GM12878 (cell line): ENCODE measurements at regions of chr15 and their contacts with region 1.

Region 1: GRCh38 chr15:59247364-59247763 is 40.7 kb downstream of the LDHAL6B start:
- DNase-seq: no peak
- ATAC-seq: peak; percentile 61
- H3K4me3 ChIP-seq: no peak overlapping the region
- H3K27ac ChIP-seq: peak overlapping the region; percentile 33; the same call in 1 of the 2 replicates
- H3K4me1 ChIP-seq: peaks cover 54% of the 10 kb centered on the region
- H3K27me3 ChIP-seq: no peaks in the 10 kb centered on the region
- CTCF ChIP-seq: peak; percentile 57 to 68 (median 62)
- EP300 ChIP-seq: no peak
- POLR2A ChIP-seq: no peak
- RAD21 ChIP-seq: peak; percentile 70

Region 2: GRCh38 chr15:58987489-58988005 is 259.8 kb before region 1 on chr15 and contains the start of gene RNF111:
- CTCF ChIA-PET with region 1: interaction called, 3 read pairs
- POLR2A ChIA-PET with region 1: interaction called, 3 read pairs
- RAD21 ChIA-PET with region 1: no interaction called
- SMC1A ChIA-PET with region 1: interaction called, 4 read pairs
- in situ Hi-C with region 1: no loop called
- intact Hi-C with region 1: loop called (anchors 10 kb)
- DNase-seq: peak; percentile 90
- ATAC-seq: peak; percentile 90
- H3K4me3 ChIP-seq: peak within 1 kb of the TSS; percentile 75
- H3K27ac ChIP-seq: peak within 1 kb of the TSS; percentile 92
- H3K4me1 ChIP-seq: no peaks in the 10 kb centered on the region
- H3K27me3 ChIP-seq: no peaks in the 10 kb centered on the region
- CTCF ChIP-seq: no peak
- EP300 ChIP-seq: no peak
- POLR2A ChIP-seq: peak; percentile 76
- RAD21 ChIP-seq: no peak
- polyA plus RNA-seq, gene RNF111: 8.6 TPM

Region 3: DNA sequence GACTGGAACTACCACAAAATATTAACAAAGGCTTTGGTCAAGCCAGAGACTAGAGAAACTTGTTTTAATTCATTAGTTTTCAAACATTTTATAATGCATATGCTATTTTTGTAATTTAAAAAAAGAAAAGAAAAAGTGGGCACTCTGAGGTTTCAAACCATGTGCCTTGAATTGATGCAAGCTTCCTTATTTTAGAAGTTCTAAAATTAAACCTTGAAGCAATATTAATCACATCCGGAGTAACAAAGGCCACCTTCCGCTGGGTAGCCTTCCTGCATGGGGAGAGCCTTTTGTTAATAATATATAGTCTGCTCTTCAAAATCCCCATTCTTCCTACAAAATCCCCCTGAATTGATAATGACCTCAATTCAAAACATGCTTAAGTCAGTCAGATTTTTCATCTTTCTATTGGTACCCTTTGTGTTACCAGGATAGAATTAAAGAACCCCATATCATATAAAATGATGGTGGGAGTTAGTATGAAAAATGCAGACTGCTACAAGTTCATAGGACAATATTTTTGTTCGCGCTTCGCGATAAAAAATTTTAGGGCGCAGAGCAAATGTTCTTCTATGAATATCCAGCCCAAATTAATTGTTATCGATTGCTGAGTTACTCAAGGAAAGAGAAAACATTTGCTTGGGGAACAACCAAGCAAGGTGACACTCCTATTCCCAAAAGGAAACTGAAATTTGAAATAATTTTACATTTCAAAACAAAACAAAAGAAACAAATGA is 10.1 kb before region 1 on chr15:
- CTCF ChIA-PET with region 1: interaction called, 44 read pairs
- POLR2A ChIA-PET with region 1: interaction called, 5 read pairs
- RAD21 ChIA-PET with region 1: interaction called, 46 read pairs
- SMC1A ChIA-PET with region 1: interaction called, 70 read pairs
- in situ Hi-C with region 1: no loop called
- intact Hi-C with region 1: no loop called
- DNase-seq: peak; percentile 70
- ATAC-seq: peak; percentile 89
- H3K4me3 ChIP-seq: peak overlapping the region; percentile 35
- H3K27ac ChIP-seq: peak overlapping the region; percentile 78
- H3K4me1 ChIP-seq: peaks cover 11% of the 10 kb centered on the region
- H3K27me3 ChIP-seq: no peaks in the 10 kb centered on the region
- CTCF ChIP-seq: no peak
- EP300 ChIP-seq: peak; percentile 52 to 87; a peak in 2 of 4 replicates
- POLR2A ChIP-seq: no peak
- RAD21 ChIP-seq: no peak

Region 4: DNA sequence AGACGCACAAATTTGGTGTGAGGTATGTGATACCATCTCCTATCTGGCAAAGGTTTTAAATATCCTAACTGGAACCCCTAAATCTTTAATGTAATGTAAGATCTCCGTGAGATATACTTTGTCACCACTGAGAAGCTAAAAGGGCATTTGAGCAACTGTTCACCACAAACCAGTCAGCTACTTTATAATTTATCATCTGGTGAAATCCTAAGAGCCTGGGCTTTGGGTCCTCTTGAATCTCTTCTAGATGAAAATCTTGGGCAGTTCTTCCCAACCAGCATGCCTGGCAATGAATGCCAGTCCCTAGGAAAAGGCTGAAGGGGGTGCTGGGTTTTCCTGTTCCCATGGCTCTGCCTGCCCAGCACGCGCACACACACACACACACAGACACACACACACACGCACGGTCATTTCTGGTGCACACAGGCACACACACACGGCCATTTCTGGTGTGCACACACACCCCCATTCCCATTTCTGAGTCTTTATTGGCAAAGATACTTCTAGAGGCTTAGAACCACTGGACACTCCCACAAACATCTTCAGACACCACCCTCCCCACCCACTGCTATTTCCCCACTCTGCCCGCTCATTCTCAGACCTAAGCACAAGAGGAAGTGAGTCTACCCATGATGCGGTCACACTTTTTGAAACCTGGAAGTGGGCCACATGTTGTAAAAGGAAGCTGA is 52.7 kb after region 1 on chr15:
- CTCF ChIA-PET with region 1: interaction called, 68 read pairs
- POLR2A ChIA-PET with region 1: interaction called, 14 read pairs
- RAD21 ChIA-PET with region 1: interaction called, 54 read pairs
- SMC1A ChIA-PET with region 1: interaction called, 64 read pairs
- in situ Hi-C with region 1: no loop called
- intact Hi-C with region 1: loop called (anchors 2 kb)
- DNase-seq: peak; percentile 97
- ATAC-seq: peak; percentile 77
- H3K4me3 ChIP-seq: peak overlapping the region; percentile 8; the same call in 1 of the 2 replicates
- H3K27ac ChIP-seq: peak overlapping the region; percentile 96
- H3K4me1 ChIP-seq: peaks cover 82% of the 10 kb centered on the region
- H3K27me3 ChIP-seq: no peaks in the 10 kb centered on the region
- CTCF ChIP-seq: no peak
- EP300 ChIP-seq: peak; percentile 62 to 87; a peak in 3 of 4 replicates
- POLR2A ChIP-seq: no peak
- RAD21 ChIP-seq: 0 out of 2 replicates have a peak, but pooled peaks have one; percentile 16

Region 5: DNA sequence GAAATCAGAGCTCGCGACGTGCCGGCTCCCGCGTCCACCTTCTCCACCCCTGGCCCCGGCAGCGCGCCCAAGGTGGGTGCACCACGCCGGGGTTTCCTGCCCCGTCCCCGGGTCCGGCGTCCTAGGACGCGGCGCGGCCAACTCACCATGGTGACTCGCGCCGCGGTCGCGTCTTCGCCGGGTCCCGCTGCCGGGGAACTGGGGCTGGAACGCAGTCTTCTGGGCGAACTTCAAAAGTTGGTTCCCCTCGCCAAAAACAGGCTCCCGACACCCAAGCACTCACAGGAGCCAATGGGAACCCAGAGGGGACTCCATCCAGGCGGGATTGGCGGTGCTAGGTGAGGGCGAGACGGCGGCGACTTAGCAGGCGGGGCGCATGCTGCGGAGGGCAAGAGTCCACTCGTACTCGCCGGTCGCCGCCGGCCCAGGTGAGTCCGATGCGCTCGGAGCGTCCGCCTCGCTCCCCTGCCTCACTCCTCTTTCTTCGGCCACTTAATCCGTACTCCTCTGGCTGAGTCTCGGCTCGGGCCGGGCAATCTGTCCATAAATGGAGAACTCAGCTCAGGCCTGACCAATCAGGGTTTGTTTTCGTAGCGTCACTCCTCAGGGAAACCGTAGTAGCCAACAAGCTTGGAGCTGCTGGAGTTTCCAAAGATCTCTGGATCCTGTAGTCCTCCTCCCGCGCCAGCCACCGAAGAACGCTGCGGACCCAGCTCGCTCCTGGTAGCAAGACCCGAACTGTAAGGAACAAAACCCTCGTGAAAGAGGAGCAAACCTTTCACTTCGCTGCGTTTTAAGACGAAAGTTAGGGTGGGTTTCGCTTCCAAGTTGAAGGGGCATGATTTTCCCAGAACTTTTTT is 125.2 kb after region 1 on chr15 and contains the start of gene MYO1E:
- CTCF ChIA-PET with region 1: interaction called, 8 read pairs
- POLR2A ChIA-PET with region 1: interaction called, 7 read pairs
- RAD21 ChIA-PET with region 1: interaction called, 20 read pairs
- SMC1A ChIA-PET with region 1: interaction called, 8 read pairs
- in situ Hi-C with region 1: no loop called
- intact Hi-C with region 1: loop called (anchors 2 kb)
- DNase-seq: peak; percentile 72
- ATAC-seq: peak; percentile 76
- H3K4me3 ChIP-seq: peak within 1 kb of the TSS; percentile 75
- H3K27ac ChIP-seq: peak within 1 kb of the TSS; percentile 95
- H3K4me1 ChIP-seq: peaks cover 3% of the 10 kb centered on the region
- H3K27me3 ChIP-seq: no peaks in the 10 kb centered on the region
- CTCF ChIP-seq: no peak
- EP300 ChIP-seq: no peak
- POLR2A ChIP-seq: peak; percentile 88
- RAD21 ChIP-seq: no peak
- polyA plus RNA-seq, gene MYO1E: 10.3 to 27.5 TPM

Region 6: DNA sequence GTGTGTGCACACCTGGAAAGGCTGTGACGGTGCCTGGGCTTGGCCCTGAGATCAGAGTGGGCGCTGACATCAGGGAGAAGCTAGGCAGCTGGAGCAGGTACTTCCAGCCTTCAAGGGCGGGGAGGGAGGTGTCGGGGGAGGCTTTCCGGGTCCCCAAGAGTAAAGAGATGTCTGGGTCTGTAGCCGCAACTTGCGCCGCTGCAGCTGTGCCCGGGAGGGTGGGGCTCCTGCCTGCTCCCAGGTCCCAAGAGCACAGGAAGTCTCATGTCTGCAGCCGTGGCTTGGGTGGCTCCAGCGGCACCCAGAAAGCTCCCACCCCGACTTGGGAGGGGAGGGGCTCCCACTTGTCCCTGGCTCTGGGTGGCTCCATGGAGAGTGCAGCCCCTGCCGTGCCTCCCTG is 545.0 kb after region 1 on chr15:
- CTCF ChIA-PET with region 1: no interaction called
- POLR2A ChIA-PET with region 1: no interaction called
- RAD21 ChIA-PET with region 1: no interaction called
- SMC1A ChIA-PET with region 1: no interaction called
- in situ Hi-C with region 1: no loop called
- intact Hi-C with region 1: no loop called
- DNase-seq: no peak
- ATAC-seq: no peak
- H3K4me3 ChIP-seq: no peak overlapping the region
- H3K27ac ChIP-seq: no peak overlapping the region
- H3K4me1 ChIP-seq: no peaks in the 10 kb centered on the region
- H3K27me3 ChIP-seq: peaks cover 0 to 3% of the 10 kb centered on the region in 2 experiments; a peak in 2 of 4 replicates
- CTCF ChIP-seq: no peak
- EP300 ChIP-seq: no peak
- POLR2A ChIP-seq: no peak
- RAD21 ChIP-seq: no peak